Mammary epithelial cell (primary cell): ENCODE measurements at regions of chr15 and their contacts with region 1.

Region 1: DNA sequence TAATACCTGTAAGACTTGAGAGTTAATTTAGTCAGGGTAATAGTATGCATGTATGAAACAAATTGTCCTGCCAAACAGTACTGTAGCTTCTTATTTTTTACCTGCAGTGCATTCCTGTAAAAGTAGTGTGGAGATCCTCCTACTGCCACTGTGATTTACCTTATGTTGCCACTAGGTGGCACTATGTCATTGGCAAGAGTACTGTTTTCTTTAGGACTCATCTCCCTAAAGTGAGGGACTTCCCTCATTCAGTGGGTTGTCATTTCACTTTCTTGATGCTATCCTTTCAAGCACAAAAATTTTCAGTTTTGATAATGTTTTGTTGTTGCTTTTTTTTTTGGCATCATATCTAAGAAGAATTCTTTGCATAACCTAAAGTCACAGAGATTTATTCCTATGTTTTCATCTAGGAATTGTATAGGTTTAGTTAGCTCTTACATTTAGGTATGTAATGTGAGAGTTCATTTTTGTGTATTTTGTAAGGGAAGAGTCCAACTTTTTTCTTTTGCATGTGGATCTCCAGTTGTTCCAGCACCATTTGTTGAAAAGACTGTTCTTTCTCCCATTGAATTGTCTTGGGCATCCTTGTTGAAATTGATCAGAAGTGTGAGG is 105.7 kb downstream of the AKAP13 start:
- DNase-seq: peak; percentile 79
- H3K4me3 ChIP-seq: no peak overlapping the region
- H3K27ac ChIP-seq: no peak overlapping the region
- H3K4me1 ChIP-seq: peaks cover 24% of the 10 kb centered on the region
- H3K27me3 ChIP-seq: no peaks in the 10 kb centered on the region
- CTCF ChIP-seq: peak; percentile 61 to 78

Region 2: GRCh38 chr15:85318048-85318731 is 167.9 kb before region 1 on chr15:
- CTCF ChIA-PET with region 1: no interaction called
- dilution Hi-C with region 1: no loop called
- in situ Hi-C with region 1: loop called in 1 of 2 experiments (anchors 25 kb)
- intact Hi-C with region 1: no loop called
- DNase-seq: peak; percentile 90
- H3K4me3 ChIP-seq: no peak overlapping the region
- H3K27ac ChIP-seq: peak overlapping the region; percentile 43
- H3K4me1 ChIP-seq: peaks cover 16% of the 10 kb centered on the region
- H3K27me3 ChIP-seq: no peaks in the 10 kb centered on the region
- CTCF ChIP-seq: peak in 1 of 2 donors; percentile 22

Region 3: GRCh38 chr15:85430406-85431204 is 55.5 kb before region 1 on chr15:
- CTCF ChIA-PET with region 1: no interaction called
- dilution Hi-C with region 1: loop called (anchors 5 kb)
- in situ Hi-C with region 1: no loop called
- intact Hi-C with region 1: no loop called
- DNase-seq: peak; percentile 68
- H3K4me3 ChIP-seq: no peak overlapping the region
- H3K27ac ChIP-seq: no peak overlapping the region
- H3K4me1 ChIP-seq: no peaks in the 10 kb centered on the region
- H3K27me3 ChIP-seq: no peaks in the 10 kb centered on the region
- CTCF ChIP-seq: no peak

Region 4: GRCh38 chr15:85570336-85570735 is 84.3 kb after region 1 on chr15:
- CTCF ChIA-PET with region 1: no interaction called
- dilution Hi-C with region 1: loop called (anchors 5 kb)
- in situ Hi-C with region 1: no loop called
- intact Hi-C with region 1: no loop called
- DNase-seq: no peak
- H3K4me3 ChIP-seq: no peak overlapping the region
- H3K27ac ChIP-seq: no peak overlapping the region
- H3K4me1 ChIP-seq: no peaks in the 10 kb centered on the region
- H3K27me3 ChIP-seq: no peaks in the 10 kb centered on the region
- CTCF ChIP-seq: no peak

Region 5: GRCh38 chr15:85597155-85597815 is 111.2 kb after region 1 on chr15:
- CTCF ChIA-PET with region 1: no interaction called
- dilution Hi-C with region 1: no loop called
- in situ Hi-C with region 1: no loop called
- intact Hi-C with region 1: no loop called
- DNase-seq: no peak
- H3K4me3 ChIP-seq: no peak overlapping the region
- H3K27ac ChIP-seq: no peak overlapping the region
- H3K4me1 ChIP-seq: peaks cover 9% of the 10 kb centered on the region
- H3K27me3 ChIP-seq: no peaks in the 10 kb centered on the region
- CTCF ChIP-seq: no peak

Region 6: GRCh38 chr15:85840065-85840801 is 354.2 kb after region 1 on chr15:
- CTCF ChIA-PET with region 1: no interaction called
- dilution Hi-C with region 1: no loop called
- in situ Hi-C with region 1: no loop called
- intact Hi-C with region 1: loop called (anchors 10 kb)
- DNase-seq: peak; percentile 63
- H3K4me3 ChIP-seq: peak overlapping the region in 2 of 3 experiments; percentile 3 to 35
- H3K27ac ChIP-seq: no peak overlapping the region
- H3K4me1 ChIP-seq: peaks cover 4% of the 10 kb centered on the region
- H3K27me3 ChIP-seq: no peaks in the 10 kb centered on the region
- CTCF ChIP-seq: peak; percentile 55 to 97